ENCODE measurements at regions of chr17 and their contacts with region 1.

Region 1: GRCh38 chr17:55770148-55770870 is 19.5 kb downstream of the PCTP start:
- DNase-seq: peak; percentile 29
- H3K4me3 ChIP-seq: no peak overlapping the region
- H3K27ac ChIP-seq: peak overlapping the region; percentile 78
- H3K27me3 ChIP-seq: no peaks in the 10 kb centered on the region
- CTCF ChIP-seq: peak; percentile 61

Region 2: GRCh38 chr17:55641676-55642081 is 128.6 kb before region 1 on chr17:
- CTCF ChIA-PET with region 1: interaction called, 42 read pairs
- POLR2A ChIA-PET with region 1: no interaction called
- DNase-seq: peak; percentile 48
- H3K4me3 ChIP-seq: no peak overlapping the region
- H3K27ac ChIP-seq: no peak overlapping the region
- H3K27me3 ChIP-seq: peaks cover 5% of the 10 kb centered on the region
- CTCF ChIP-seq: peak; percentile 80

Region 3: GRCh38 chr17:55726440-55726839 is 43.9 kb before region 1 on chr17:
- CTCF ChIA-PET with region 1: interaction called, 18 read pairs
- POLR2A ChIA-PET with region 1: no interaction called
- DNase-seq: peak; percentile 80
- H3K4me3 ChIP-seq: no peak overlapping the region
- H3K27ac ChIP-seq: no peak overlapping the region
- H3K27me3 ChIP-seq: no peaks in the 10 kb centered on the region
- CTCF ChIP-seq: no peak

Region 4: GRCh38 chr17:55750750-55751657 is 19.3 kb before region 1 on chr17 and contains the start of gene PCTP:
- CTCF ChIA-PET with region 1: interaction called, 18 read pairs
- POLR2A ChIA-PET with region 1: interaction called, 3 read pairs
- DNase-seq: peak; percentile 68
- H3K4me3 ChIP-seq: peak within 1 kb of the TSS; percentile 89
- H3K27ac ChIP-seq: peak within 1 kb of the TSS; percentile 59
- H3K27me3 ChIP-seq: peaks cover 6% of the 10 kb centered on the region
- CTCF ChIP-seq: peak; percentile 57
- polyA plus RNA-seq, gene PCTP: 17.3 and 20.5 TPM in 2 replicates

Measured in AG04450 (cell line).